ENCODE measurements at regions of chr11 and their contacts with region 1.

Region 1: GRCh38 chr11:111878849-111879636 is at the starts of genes CFAP68 and FDXACB1:
- DNase-seq: peak; percentile 91 to 99 (median 95)
- ATAC-seq: peak; percentile 89
- H3K4me3 ChIP-seq: peak within 1 kb of the TSS; percentile 73 to 76
- H3K4me3 Mint-ChIP-seq: peak within 1 kb of the TSS; percentile 92
- H3K27ac ChIP-seq: peak within 1 kb of the TSS; percentile 98
- H3K27ac Mint-ChIP-seq: peak within 1 kb of the TSS; percentile 100
- H3K4me1 ChIP-seq: peaks cover 14% of the 10 kb centered on the region
- H3K4me1 Mint-ChIP-seq: peaks cover 24% of the 10 kb centered on the region
- H3K27me3 ChIP-seq: no peaks in the 10 kb centered on the region
- H3K27me3 Mint-ChIP-seq: no peaks in the 10 kb centered on the region
- CTCF ChIP-seq: peak; percentile 94
- total RNA-seq, gene CFAP68: 21.7 to 22.7 TPM
- total RNA-seq, gene FDXACB1: 4.3 to 5.4 TPM

Region 2: GRCh38 chr11:111601979-111602864 is 276.8 kb before region 1 on chr11 and contains the start of gene SIK2:
- CTCF ChIA-PET with region 1: no interaction called
- POLR2A ChIA-PET with region 1: no interaction called
- intact Hi-C with region 1: loop called (anchors 1 to 2 kb)
- DNase-seq: peak; percentile 78 to 96 (median 90)
- ATAC-seq: peak; percentile 83
- H3K4me3 ChIP-seq: peak within 1 kb of the TSS; percentile 70 to 95
- H3K4me3 Mint-ChIP-seq: peak within 1 kb of the TSS; percentile 94
- H3K27ac ChIP-seq: peak within 1 kb of the TSS; percentile 77 to 94
- H3K27ac Mint-ChIP-seq: peak within 1 kb of the TSS; percentile 94
- H3K4me1 ChIP-seq: peaks cover 24% of the 10 kb centered on the region
- H3K4me1 Mint-ChIP-seq: peaks cover 27% of the 10 kb centered on the region
- H3K27me3 ChIP-seq: no peaks in the 10 kb centered on the region
- H3K27me3 Mint-ChIP-seq: no peaks in the 10 kb centered on the region
- CTCF ChIP-seq: peak; percentile 57
- total RNA-seq, gene SIK2: 2.9 to 3.2 TPM

Region 3: DNA sequence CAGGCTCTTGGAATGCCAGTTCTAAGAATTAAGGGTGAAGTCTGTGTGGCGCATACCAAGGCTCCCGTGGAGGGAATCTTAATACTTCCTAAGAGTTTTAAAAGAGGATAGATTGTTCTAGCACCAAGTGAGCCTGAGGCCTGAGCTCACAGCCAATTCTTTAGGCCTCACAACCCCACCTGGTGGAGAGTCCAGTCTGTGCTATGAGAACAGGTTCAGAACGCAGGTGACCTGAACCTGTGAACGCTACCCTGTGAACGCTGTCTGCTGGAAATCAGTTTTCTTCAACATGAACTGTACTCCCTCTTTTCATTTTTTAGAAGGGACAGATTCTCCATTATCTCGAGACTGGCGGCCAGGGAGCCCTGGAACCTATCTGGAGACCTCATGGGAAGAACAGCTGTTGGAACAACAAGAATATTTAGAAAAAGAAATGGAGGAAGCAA is 103.0 kb after region 1 on chr11:
- CTCF ChIA-PET with region 1: interaction called, 4 read pairs
- POLR2A ChIA-PET with region 1: no interaction called
- intact Hi-C with region 1: loop called (anchors 1 to 2 kb)
- DNase-seq: peak; percentile 24 to 64 (median 51)
- ATAC-seq: peak; percentile 90
- H3K4me3 ChIP-seq: no peak overlapping the region
- H3K4me3 Mint-ChIP-seq: no peak overlapping the region
- H3K27ac ChIP-seq: no peak overlapping the region
- H3K27ac Mint-ChIP-seq: no peak overlapping the region
- H3K4me1 ChIP-seq: peaks cover 7% of the 10 kb centered on the region
- H3K4me1 Mint-ChIP-seq: peaks cover 7% of the 10 kb centered on the region
- H3K27me3 ChIP-seq: peaks cover 0 to 5% of the 10 kb centered on the region in 2 experiments
- H3K27me3 Mint-ChIP-seq: peaks cover 26% of the 10 kb centered on the region
- CTCF ChIP-seq: peak; percentile 31

Region 4: DNA sequence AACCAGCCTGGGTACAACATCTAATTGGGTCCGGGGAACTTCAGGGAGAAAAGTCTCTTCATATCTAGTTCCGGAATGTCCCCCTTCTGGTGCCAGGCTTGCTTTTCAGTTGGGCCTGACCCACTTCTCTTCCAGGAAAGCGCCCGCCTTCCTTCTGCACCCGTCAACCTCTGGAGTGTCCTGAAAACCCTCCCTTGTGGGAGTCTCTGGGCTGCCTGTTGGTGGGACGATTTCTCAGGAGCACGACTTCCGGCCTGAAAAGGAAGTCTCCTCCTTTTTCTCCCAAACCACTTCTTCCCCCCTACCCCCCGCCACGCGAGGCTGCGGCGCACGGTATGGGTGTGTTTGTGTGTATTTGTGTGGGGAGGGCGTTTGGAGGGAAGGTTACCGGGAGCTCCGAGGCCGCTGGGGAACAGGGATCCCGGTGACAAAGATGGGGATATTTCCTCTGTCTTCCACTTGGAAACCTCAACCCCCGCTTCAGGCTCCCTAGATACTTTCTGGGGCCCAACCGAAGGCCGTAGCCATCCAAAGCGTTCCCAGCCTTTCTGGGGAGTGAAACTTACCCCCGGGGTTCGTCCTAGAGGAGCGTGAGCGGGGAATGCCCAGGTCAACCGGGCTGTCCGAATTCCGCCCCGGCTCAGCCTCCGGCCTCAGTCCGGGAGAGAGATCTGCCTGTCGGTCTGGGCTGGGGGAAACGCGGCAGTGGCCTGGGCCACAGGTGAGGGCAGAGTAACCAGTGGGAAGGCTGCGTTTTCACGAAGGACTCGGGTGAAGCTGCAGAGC is 195.2 kb after region 1 on chr11 and contains the start of gene NKAPD1:
- CTCF ChIA-PET with region 1: no interaction called
- POLR2A ChIA-PET with region 1: no interaction called
- intact Hi-C with region 1: loop called (anchors 1 to 2 kb)
- DNase-seq: peak; percentile 64 to 92 (median 82)
- ATAC-seq: peak; percentile 79
- H3K4me3 ChIP-seq: peak within 1 kb of the TSS; percentile 79 to 87
- H3K4me3 Mint-ChIP-seq: peak within 1 kb of the TSS; percentile 96
- H3K27ac ChIP-seq: peak within 1 kb of the TSS; percentile 70 to 80
- H3K27ac Mint-ChIP-seq: peak within 1 kb of the TSS; percentile 95
- H3K4me1 ChIP-seq: peaks cover 12% of the 10 kb centered on the region
- H3K4me1 Mint-ChIP-seq: peaks cover 33% of the 10 kb centered on the region
- H3K27me3 ChIP-seq: no peaks in the 10 kb centered on the region
- H3K27me3 Mint-ChIP-seq: peaks cover 7% of the 10 kb centered on the region
- CTCF ChIP-seq: no peak
- total RNA-seq, gene NKAPD1: 16.3 to 17.0 TPM

Region 5: GRCh38 chr11:112280268-112281126 is 401.5 kb after region 1 on chr11:
- CTCF ChIA-PET with region 1: no interaction called
- POLR2A ChIA-PET with region 1: no interaction called
- intact Hi-C with region 1: loop called in 1 of 2 experiments (anchors 5 kb)
- DNase-seq: peak; percentile 24 to 90 (median 67)
- ATAC-seq: peak; percentile 93
- H3K4me3 ChIP-seq: peak overlapping the region; percentile 60 to 79
- H3K4me3 Mint-ChIP-seq: peak overlapping the region; percentile 92
- H3K27ac ChIP-seq: peak overlapping the region in 1 of 2 experiments; percentile 28
- H3K27ac Mint-ChIP-seq: peak overlapping the region; percentile 77
- H3K4me1 ChIP-seq: no peaks in the 10 kb centered on the region
- H3K4me1 Mint-ChIP-seq: peaks cover 8% of the 10 kb centered on the region
- H3K27me3 ChIP-seq: no peaks in the 10 kb centered on the region
- H3K27me3 Mint-ChIP-seq: no peaks in the 10 kb centered on the region
- CTCF ChIP-seq: peak; percentile 44